Activated naive CD4-positive, alpha-beta T cell treated with anti-CD3 and anti-CD28 coated beads for 36 hours (primary cell): ENCODE measurements at regions of chr5 and their contacts with region 1.

Region 1: GRCh38 chr5:147935032-147935431 is 28.7 kb upstream of the C5orf46 start:
- DNase-seq: no peak
- H3K4me3 Mint-ChIP-seq: no peak overlapping the region
- H3K27ac Mint-ChIP-seq: no peak overlapping the region
- H3K4me1 Mint-ChIP-seq: no peaks in the 10 kb centered on the region
- H3K27me3 Mint-ChIP-seq: no peaks in the 10 kb centered on the region

Region 2: GRCh38 chr5:147426928-147427327 is 508.1 kb before region 1 on chr5:
- CTCF ChIA-PET with region 1: no interaction called
- intact Hi-C with region 1: no loop called
- DNase-seq: no peak
- H3K4me3 Mint-ChIP-seq: no peak overlapping the region
- H3K27ac Mint-ChIP-seq: no peak overlapping the region
- H3K4me1 Mint-ChIP-seq: no peaks in the 10 kb centered on the region
- H3K27me3 Mint-ChIP-seq: peaks cover 4% of the 10 kb centered on the region

Region 3: GRCh38 chr5:147628058-147628895 is 306.8 kb before region 1 on chr5:
- CTCF ChIA-PET with region 1: no interaction called
- intact Hi-C with region 1: loop called (anchors 10 kb)
- DNase-seq: peak; percentile 64
- H3K4me3 Mint-ChIP-seq: no peak overlapping the region
- H3K27ac Mint-ChIP-seq: no peak overlapping the region
- H3K4me1 Mint-ChIP-seq: no peaks in the 10 kb centered on the region
- H3K27me3 Mint-ChIP-seq: peaks cover 9% of the 10 kb centered on the region

Region 4: DNA sequence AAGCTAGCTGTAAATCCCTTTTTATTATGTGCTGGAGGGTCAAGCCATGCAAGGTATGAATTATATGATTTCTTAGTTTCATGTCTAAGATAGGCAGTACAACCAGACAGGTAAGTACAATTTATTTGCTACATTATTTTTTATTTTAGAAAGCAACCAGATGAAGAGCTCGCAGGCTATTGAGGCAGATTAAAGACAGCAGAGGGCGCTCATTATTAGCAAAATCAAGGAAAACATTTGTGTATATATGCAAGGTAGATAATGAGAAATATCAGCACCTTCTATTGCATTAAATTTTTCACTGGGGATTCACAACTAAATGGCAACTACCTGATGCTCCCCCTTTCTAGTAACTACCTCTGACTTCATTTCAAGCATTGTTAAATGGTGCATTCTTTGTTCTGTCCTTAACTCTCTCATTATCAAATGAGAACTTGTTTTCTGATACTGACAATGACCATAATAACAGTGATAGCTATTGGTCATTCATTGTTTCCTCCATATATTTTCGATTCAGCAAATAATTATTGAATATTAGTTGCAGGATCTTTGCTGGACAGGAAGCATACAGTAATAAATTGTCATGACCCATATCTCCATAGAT is 47.9 kb before region 1 on chr5:
- CTCF ChIA-PET with region 1: no interaction called
- intact Hi-C with region 1: loop called (anchors 1 kb)
- DNase-seq: no peak
- H3K4me3 Mint-ChIP-seq: no peak overlapping the region
- H3K27ac Mint-ChIP-seq: no peak overlapping the region
- H3K4me1 Mint-ChIP-seq: no peaks in the 10 kb centered on the region
- H3K27me3 Mint-ChIP-seq: peaks cover 8% of the 10 kb centered on the region